ENCODE measurements at regions of chr16 and their contacts with region 1.

Region 1: DNA sequence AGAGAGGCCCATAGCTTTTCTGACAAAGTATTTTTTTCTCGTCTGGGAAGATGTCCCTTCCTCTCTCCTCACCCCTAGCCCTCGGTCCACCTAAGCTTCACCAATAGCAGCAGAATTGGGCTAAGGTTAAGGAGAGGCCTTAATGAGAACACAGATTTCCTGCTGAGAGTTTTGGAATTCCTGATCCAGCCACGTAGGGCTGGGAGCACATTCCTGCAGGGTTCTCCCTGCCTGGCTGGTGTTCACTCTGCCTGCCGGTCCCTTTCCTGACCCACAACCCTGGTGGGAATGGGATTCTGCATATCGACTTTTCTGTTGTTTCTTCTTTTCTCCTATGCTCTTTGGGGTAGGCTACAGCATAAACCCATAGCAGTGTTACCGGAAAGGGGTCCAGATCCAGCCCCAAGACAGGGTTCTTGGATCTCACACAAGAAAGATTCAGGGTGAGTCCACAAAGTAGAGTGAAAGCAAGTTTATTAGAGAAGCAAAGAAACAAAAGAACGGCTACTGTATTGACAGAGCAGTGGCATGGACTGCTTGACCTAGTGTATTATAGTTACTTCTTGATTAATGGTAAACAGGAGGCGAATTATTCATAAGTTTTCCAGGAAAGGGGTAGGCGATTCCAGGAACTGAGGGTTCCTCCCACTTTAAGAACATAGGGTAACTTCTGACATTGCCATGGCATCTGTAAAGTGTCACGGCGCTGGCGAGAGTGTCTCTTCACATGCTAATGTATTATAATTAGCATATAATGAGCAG is 92.9 kb downstream of the CACNG3 start:
- DNase-seq: no peak
- H3K4me3 ChIP-seq: no peak overlapping the region
- H3K27ac ChIP-seq: no peak overlapping the region
- H3K4me1 ChIP-seq: no peaks in the 10 kb centered on the region
- H3K27me3 ChIP-seq: no peaks in the 10 kb centered on the region
- CTCF ChIP-seq: no peak
- POLR2A ChIP-seq: no peak

Region 2: DNA sequence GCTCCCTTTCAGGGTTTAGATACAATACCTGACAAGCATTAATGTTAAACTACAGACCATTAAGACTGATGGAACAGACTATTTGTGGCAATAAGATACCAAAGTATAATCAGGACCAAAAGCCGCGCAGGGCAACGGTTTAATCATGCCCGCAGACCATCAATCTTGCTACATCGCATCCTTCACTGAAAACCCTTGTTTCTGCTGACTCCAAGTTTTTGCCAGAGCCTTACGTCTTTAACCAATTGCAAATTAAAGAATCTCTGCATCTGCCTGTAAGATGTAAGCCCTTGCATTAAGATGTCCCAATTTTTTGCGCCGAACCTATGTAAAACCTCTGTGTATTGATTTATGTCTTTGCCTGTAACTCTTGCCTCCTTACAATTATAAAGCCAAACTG is 96.1 kb after region 1 on chr16:
- intact Hi-C with region 1: loop called (anchors 5 kb)
- DNase-seq: no peak
- H3K4me3 ChIP-seq: no peak overlapping the region
- H3K27ac ChIP-seq: no peak overlapping the region
- H3K4me1 ChIP-seq: no peaks in the 10 kb centered on the region
- H3K27me3 ChIP-seq: no peaks in the 10 kb centered on the region
- CTCF ChIP-seq: no peak
- POLR2A ChIP-seq: no peak

Measured in vagina (tissue), 2 donors.